ENCODE measurements at regions of chr3 and their contacts with region 1.

Region 1: DNA sequence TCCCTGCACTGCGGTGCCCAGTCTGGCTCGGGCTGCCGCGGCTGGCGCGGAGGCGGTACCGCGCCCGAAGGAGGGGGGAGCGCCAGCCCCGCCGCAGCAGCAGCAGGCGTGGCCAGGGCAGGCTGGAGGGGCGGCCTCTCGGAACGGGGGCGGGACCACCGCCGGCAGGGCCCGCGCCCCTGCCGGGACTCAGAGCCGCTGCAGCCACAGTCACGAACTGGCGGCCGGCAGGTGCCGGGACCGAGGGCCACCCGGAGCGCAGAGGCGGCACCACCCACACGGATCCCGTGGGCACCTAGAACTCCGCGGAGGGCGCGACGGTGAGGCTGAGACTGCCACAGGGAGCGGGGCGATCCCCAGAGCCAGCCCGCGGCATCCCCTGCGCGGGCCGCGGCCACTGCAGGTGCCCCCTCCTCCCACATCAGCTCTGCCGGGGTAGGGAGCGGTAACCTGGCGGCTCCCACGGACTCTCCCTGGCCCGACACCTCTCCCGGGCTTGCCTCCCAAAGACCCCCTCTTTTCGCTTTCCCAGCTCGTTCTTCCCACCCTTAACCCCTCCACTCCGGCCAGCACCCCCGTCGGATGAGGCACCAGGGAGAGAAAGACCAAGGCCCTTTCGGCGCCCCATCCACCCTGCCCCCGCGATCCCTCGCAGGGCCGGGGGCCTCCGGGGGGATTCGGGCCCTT is at the start of gene VWA5B2:
- DNase-seq: peak; percentile 44
- ATAC-seq: peak; percentile 90
- H3K4me3 ChIP-seq: peak within 1 kb of the TSS; percentile 56 to 80 (median 69)
- H3K27ac ChIP-seq: no peak within 1 kb of the TSS
- H3K4me1 ChIP-seq: peaks cover 11% of the 10 kb centered on the region; the same call in 1 of the 2 replicates
- H3K27me3 ChIP-seq: peaks cover 9 to 67% of the 10 kb centered on the region in 2 experiments; a peak in 4 of 5 replicates
- CTCF ChIP-seq: peak; percentile 15; the same call in 1 of the 2 replicates
- EP300 ChIP-seq: no peak
- POLR2A ChIP-seq: no peak
- RAD21 ChIP-seq: peak; percentile 9; the same call in 1 of the 2 replicates
- total RNA-seq, gene VWA5B2: 0.04 TPM in 1 of 2 replicates, not detected in the other

Region 2: DNA sequence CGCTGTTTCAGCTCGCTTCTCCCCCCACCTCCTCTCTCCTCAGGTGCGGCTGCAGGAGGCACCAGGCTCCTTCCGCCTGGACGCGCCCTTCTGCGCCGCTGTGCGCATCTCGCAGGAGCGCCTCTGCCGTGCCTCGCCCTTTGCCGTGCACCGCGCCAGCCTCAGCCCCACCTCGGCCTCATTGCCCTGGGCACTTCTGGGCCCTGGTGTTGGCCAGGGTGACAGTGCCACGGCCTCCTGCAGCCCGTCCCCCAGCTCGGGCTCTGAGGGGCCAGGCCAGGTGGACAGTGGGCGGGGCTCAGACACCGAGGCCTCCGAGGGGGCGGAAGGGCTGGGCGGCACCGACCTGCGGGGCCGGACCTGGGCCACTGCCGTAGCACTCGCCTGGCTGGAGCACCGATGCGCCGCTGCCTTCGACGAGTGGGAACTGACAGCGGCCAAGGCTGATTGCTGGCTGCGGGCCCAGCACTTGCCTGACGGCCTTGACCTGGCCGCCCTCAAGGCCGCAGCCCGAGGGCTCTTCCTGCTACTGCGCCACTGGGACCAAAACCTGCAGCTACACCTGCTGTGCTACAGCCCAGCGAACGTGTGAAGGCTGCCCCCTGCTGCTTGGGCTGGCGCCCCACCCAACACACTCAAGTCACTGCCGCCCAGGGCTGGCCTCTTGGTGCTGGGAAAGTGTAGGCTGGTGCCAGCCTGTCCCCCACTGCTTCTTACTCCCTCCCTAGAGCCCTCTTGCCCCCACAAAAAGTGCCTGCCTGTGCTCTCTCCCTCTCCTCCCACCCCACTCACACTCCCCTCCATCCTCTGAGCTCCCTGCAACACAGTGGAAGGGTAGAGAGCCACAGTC is 12.1 kb after region 1 on chr3:
- CTCF ChIA-PET with region 1: interaction called, 13 read pairs
- POLR2A ChIA-PET with region 1: interaction called, 8 read pairs
- in situ Hi-C with region 1: no loop called
- intact Hi-C with region 1: no loop called
- DNase-seq: peak; percentile 86
- ATAC-seq: peak; percentile 92
- H3K4me3 ChIP-seq: peak overlapping the region in 1 of 3 experiments; percentile 2; a peak in 1 of 6 replicates
- H3K27ac ChIP-seq: peak overlapping the region; percentile 24
- H3K4me1 ChIP-seq: peaks cover 25% of the 10 kb centered on the region
- H3K27me3 ChIP-seq: peaks cover 0 to 22% of the 10 kb centered on the region in 2 experiments; a peak in 3 of 5 replicates
- CTCF ChIP-seq: peak; percentile 99
- EP300 ChIP-seq: peak in 1 of 2 experiments; percentile 70; a peak in 1 of 4 replicates
- POLR2A ChIP-seq: no peak
- RAD21 ChIP-seq: peak; percentile 99

Region 3: DNA sequence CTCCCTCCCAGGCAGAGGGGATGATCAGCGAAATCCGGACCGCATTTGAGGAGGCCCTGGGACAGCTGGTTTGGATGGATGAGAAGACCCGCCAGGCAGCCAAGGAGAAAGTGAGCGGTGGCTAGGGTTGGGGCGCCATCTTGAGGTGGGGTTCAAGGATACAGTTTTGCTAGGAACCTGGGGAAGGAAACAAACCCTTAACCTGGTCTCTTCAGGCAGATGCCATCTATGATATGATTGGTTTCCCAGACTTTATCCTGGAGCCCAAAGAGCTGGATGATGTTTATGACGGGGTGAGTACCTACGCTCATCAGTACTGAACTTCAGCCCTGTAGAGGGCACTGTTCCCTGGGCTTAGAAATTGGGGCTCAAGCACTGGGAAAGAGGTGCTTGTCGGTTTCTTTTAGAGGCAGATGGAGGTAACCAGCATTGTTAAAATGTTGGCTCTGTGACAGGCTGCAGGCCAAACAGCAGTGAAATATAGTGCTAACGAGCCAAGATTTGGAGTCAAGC is 59.9 kb after region 1 on chr3:
- CTCF ChIA-PET with region 1: interaction called, 3 read pairs
- POLR2A ChIA-PET with region 1: no interaction called
- in situ Hi-C with region 1: no loop called
- intact Hi-C with region 1: loop called (anchors 10 kb)
- DNase-seq: no peak
- ATAC-seq: peak; percentile 34
- H3K4me3 ChIP-seq: no peak overlapping the region
- H3K27ac ChIP-seq: no peak overlapping the region
- H3K4me1 ChIP-seq: peaks cover 44% of the 10 kb centered on the region
- H3K27me3 ChIP-seq: peaks cover 3 to 24% of the 10 kb centered on the region in 2 experiments; a peak in 3 of 5 replicates
- CTCF ChIP-seq: peak; percentile 89
- EP300 ChIP-seq: no peak
- POLR2A ChIP-seq: no peak
- RAD21 ChIP-seq: peak; percentile 74

Region 4: DNA sequence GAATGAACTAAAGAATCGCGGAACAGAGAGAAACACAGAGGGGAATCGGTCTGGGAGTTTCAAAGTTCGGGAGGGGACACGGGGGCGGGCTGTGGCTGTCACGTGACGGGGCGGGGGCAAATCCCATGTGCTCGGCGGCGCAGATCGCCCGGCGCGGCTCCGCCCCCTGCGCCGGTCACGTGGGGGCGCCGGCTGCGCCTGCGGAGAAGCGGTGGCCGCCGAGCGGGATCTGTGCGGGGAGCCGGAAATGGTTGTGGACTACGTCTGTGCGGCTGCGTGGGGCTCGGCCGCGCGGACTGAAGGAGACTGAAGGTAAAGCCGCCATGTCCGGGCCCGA is 84.8 kb after region 1 on chr3 and contains the start of gene EIF4G1:
- CTCF ChIA-PET with region 1: no interaction called
- POLR2A ChIA-PET with region 1: no interaction called
- in situ Hi-C with region 1: no loop called
- intact Hi-C with region 1: no loop called
- DNase-seq: peak; percentile 82
- ATAC-seq: peak; percentile 86
- H3K4me3 ChIP-seq: peak within 1 kb of the TSS; percentile 68 to 93 (median 86)
- H3K27ac ChIP-seq: peak within 1 kb of the TSS; percentile 91
- H3K4me1 ChIP-seq: peaks cover 39% of the 10 kb centered on the region
- H3K27me3 ChIP-seq: no peaks in the 10 kb centered on the region; a peak in 1 of 5 replicates
- CTCF ChIP-seq: no peak
- EP300 ChIP-seq: 0 out of 4 replicates have a peak, but pooled peaks of 1 of the 2 experiments have one; percentile 7
- POLR2A ChIP-seq: peak; percentile 72 to 74
- RAD21 ChIP-seq: no peak
- total RNA-seq, gene EIF4G1: 213 and 244 TPM in 2 replicates